ENCODE measurements at regions of chr18 and their contacts with region 1.

Region 1: GRCh38 chr18:2655178-2655953 is at the start of gene SMCHD1:
- DNase-seq: peak; percentile 90
- ATAC-seq: peak; percentile 74
- H3K4me3 Mint-ChIP-seq: peak within 1 kb of the TSS; percentile 96
- H3K27ac Mint-ChIP-seq: peak within 1 kb of the TSS; percentile 98
- H3K4me1 Mint-ChIP-seq: peaks cover 44% of the 10 kb centered on the region
- H3K27me3 Mint-ChIP-seq: no peaks in the 10 kb centered on the region
- CTCF ChIP-seq: no peak
- total RNA-seq, gene SMCHD1: 111 and 144 TPM in 2 replicates

Region 2: DNA sequence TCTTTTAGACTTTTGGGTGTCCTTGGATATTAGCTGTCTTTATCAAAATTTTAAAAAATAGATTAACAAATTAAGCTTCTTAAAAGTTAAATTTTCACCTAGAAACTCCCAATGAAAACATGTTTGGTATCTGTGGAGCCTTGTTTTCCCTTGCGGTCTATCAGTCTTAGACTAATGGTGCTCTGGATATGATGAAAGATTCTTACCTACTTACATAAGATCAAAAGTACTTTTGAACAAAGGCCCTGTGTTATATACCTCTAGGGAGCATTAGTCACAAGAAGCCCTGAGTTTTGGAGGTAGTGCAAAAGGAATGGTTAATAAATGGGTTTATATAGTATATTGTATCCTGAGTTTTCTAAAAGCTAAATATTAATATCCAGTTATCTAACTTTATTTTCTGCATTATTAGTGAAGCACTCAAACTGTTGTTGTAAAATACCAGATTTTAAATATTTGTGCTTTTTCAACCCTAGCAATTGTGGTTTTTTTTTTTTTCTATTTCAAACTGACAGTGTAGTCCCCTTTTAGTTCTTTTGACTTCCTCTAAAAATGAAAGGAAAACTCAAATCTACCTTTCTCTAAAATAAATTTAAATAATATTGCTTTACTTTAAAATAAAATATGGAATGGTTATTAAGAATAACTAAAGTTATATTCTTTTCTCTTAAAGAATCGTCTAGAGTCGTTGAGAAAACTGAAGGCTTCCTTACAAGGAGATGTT is 65.9 kb before region 1 on chr18:
- CTCF ChIA-PET with region 1: interaction called, 3 read pairs
- POLR2A ChIA-PET with region 1: interaction called, 53 read pairs
- intact Hi-C with region 1: no loop called
- DNase-seq: no peak
- ATAC-seq: peak; percentile 80
- H3K4me3 Mint-ChIP-seq: peak overlapping the region; percentile 46
- H3K27ac Mint-ChIP-seq: peak overlapping the region; percentile 74
- H3K4me1 Mint-ChIP-seq: peaks cover 22% of the 10 kb centered on the region
- H3K27me3 Mint-ChIP-seq: no peaks in the 10 kb centered on the region
- CTCF ChIP-seq: no peak

Region 3: DNA sequence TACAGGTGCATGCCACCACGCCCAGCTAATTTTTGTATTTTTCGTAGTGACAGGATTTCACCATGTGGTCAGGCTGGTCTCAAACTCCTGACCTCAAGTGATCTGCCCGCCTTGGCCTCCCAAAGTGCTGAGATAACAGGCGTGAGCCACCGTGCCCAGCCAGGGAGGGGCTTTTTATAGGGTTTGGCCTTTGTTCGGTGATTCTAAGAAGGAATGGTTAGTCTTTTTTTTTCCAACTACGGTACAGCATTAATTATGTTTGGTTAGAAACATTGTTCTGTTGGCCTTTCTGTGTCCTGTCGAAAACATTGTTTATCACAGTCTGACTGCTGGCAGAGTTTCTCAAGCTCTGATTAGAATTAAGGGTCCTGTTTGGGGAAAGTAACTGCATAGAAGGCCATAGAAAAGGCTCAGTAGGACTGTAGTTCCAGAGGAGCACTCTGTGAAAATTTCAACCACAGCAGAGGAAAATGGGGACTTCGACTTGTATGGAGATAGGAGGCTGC is 19.2 kb before region 1 on chr18:
- CTCF ChIA-PET with region 1: interaction called, 10 read pairs
- POLR2A ChIA-PET with region 1: interaction called, 376 read pairs
- intact Hi-C with region 1: loop called (anchors 1 kb)
- DNase-seq: no peak
- ATAC-seq: peak; percentile 11
- H3K4me3 Mint-ChIP-seq: peak overlapping the region; percentile 72
- H3K27ac Mint-ChIP-seq: peak overlapping the region; percentile 99
- H3K4me1 Mint-ChIP-seq: peaks cover 96% of the 10 kb centered on the region
- H3K27me3 Mint-ChIP-seq: no peaks in the 10 kb centered on the region
- CTCF ChIP-seq: no peak

Region 4: GRCh38 chr18:2672410-2672809 is 17.0 kb after region 1 on chr18:
- CTCF ChIA-PET with region 1: no interaction called
- POLR2A ChIA-PET with region 1: interaction called, 8 read pairs
- intact Hi-C with region 1: loop called (anchors 2 kb)
- DNase-seq: no peak
- ATAC-seq: no peak
- H3K4me3 Mint-ChIP-seq: no peak overlapping the region
- H3K27ac Mint-ChIP-seq: no peak overlapping the region
- H3K4me1 Mint-ChIP-seq: peaks cover 8% of the 10 kb centered on the region
- H3K27me3 Mint-ChIP-seq: no peaks in the 10 kb centered on the region
- CTCF ChIP-seq: no peak

Region 5: DNA sequence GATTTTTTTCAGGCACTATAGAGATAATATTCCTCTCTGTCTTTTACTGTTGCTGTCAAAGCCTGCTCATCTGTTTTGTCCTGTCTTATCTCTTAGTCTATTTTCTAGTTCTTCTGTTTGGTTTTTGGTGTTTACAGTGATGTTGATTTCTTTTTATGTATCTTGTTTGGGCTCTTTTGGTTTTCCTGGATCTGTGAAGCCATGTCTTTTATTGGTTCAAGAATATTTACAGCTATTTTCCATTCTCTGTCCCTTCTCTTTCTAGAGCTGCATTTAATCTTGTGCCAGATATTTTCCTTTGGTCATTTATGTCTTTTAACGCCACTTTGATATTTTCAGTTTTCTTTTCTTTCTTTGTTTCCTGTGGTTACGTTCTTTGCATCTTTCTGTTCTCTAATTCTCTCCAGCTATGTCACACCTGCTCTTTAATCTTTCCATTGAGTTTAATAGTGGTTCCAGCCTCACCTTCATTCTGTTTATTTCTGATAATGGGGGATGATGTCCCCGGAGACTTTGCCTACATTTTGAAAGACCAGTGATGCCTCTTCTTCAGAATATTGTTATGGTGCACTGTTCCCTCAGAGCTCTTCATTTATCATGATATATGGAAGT is 32.1 kb after region 1 on chr18:
- CTCF ChIA-PET with region 1: interaction called, 5 read pairs
- POLR2A ChIA-PET with region 1: interaction called, 14 read pairs
- intact Hi-C with region 1: loop called (anchors 1 kb)
- DNase-seq: no peak
- ATAC-seq: peak; percentile 42
- H3K4me3 Mint-ChIP-seq: peak overlapping the region; percentile 69
- H3K27ac Mint-ChIP-seq: peak overlapping the region; percentile 88
- H3K4me1 Mint-ChIP-seq: peaks cover 52% of the 10 kb centered on the region
- H3K27me3 Mint-ChIP-seq: no peaks in the 10 kb centered on the region
- CTCF ChIP-seq: no peak

Region 6: GRCh38 chr18:3238742-3239141 is 583.4 kb after region 1 on chr18:
- CTCF ChIA-PET with region 1: no interaction called
- POLR2A ChIA-PET with region 1: interaction called, 16 read pairs
- intact Hi-C with region 1: no loop called
- DNase-seq: no peak
- ATAC-seq: no peak
- H3K4me3 Mint-ChIP-seq: no peak overlapping the region
- H3K27ac Mint-ChIP-seq: no peak overlapping the region
- H3K4me1 Mint-ChIP-seq: no peaks in the 10 kb centered on the region
- H3K27me3 Mint-ChIP-seq: no peaks in the 10 kb centered on the region
- CTCF ChIP-seq: no peak